B cell (primary cell): ENCODE measurements at regions of chr1 and their contacts with region 1.

Region 1: GRCh38 chr1:18902523-18903290 is at the start of gene ALDH4A1:
- DNase-seq: peak; percentile 96
- ATAC-seq: peak; percentile 96
- H3K4me3 ChIP-seq: peak within 1 kb of the TSS; percentile 60 to 85 (median 80)
- H3K4me3 Mint-ChIP-seq: peak within 1 kb of the TSS; percentile 88
- H3K27ac ChIP-seq: peak within 1 kb of the TSS; percentile 85 to 89
- H3K27ac Mint-ChIP-seq: peak within 1 kb of the TSS; percentile 98
- H3K4me1 ChIP-seq: peaks cover 18 to 30% of the 10 kb centered on the region in 2 donors
- H3K4me1 Mint-ChIP-seq: peaks cover 24% of the 10 kb centered on the region
- H3K27me3 ChIP-seq: no peaks in the 10 kb centered on the region
- H3K27me3 Mint-ChIP-seq: no peaks in the 10 kb centered on the region
- CTCF ChIP-seq: no peak
- total RNA-seq, gene ALDH4A1: 3.4 and 3.9 TPM in 2 replicates

Region 2: DNA sequence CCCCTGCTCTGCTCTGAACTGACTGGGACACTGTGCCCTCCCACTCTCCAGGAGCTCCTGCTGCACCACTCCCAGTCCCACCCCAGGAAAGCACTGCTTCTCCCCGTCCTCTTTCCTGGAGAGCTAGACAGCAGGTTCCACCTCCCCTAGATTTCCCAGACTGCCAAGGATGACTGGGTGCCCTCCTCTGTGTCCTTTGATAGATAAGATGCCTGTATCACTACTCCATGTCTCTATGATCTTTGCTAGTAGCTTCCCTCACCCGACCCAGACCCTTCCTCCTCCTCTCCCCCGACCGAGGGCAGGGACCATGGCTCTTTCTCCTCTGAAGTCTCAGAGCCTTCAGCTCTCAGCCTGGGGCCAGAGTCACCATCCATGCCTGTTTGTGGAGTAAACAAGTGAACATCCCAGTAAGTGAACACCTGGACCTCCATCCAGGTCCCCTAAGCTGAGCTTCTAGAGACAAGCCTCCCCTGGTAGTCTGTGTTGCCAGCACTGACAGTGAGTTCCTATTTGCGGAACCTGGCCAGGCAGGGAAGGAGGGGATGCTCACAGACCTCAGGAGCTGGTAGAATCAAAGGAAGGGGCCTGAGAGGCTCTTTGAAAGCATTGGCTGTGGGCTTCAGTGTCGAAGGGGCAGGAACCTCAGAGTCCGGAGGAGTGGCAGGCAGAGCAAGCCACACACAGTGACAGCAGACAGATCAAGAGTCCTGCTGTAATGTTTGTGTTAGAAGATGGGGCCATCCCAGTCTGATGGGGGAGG is 168.1 kb before region 1 on chr1:
- CTCF ChIA-PET with region 1: no interaction called
- POLR2A ChIA-PET with region 1: no interaction called
- intact Hi-C with region 1: no loop called
- DNase-seq: no peak
- ATAC-seq: no peak
- H3K4me3 ChIP-seq: no peak overlapping the region
- H3K4me3 Mint-ChIP-seq: no peak overlapping the region
- H3K27ac ChIP-seq: no peak overlapping the region
- H3K27ac Mint-ChIP-seq: no peak overlapping the region
- H3K4me1 ChIP-seq: no peaks in the 10 kb centered on the region
- H3K4me1 Mint-ChIP-seq: no peaks in the 10 kb centered on the region
- H3K27me3 ChIP-seq: peaks cover 0 to 7% (median 1%) of the 10 kb centered on the region in 4 experiments
- H3K27me3 Mint-ChIP-seq: peaks cover 23% of the 10 kb centered on the region
- CTCF ChIP-seq: no peak

Region 3: GRCh38 chr1:18805925-18806849 is 96.5 kb before region 1 on chr1:
- CTCF ChIA-PET with region 1: no interaction called
- POLR2A ChIA-PET with region 1: no interaction called
- intact Hi-C with region 1: no loop called
- DNase-seq: no peak
- ATAC-seq: no peak
- H3K4me3 ChIP-seq: no peak overlapping the region
- H3K4me3 Mint-ChIP-seq: no peak overlapping the region
- H3K27ac ChIP-seq: no peak overlapping the region
- H3K27ac Mint-ChIP-seq: no peak overlapping the region
- H3K4me1 ChIP-seq: no peaks in the 10 kb centered on the region
- H3K4me1 Mint-ChIP-seq: no peaks in the 10 kb centered on the region
- H3K27me3 ChIP-seq: peaks cover 0 to 5% (median 0%) of the 10 kb centered on the region in 4 experiments
- H3K27me3 Mint-ChIP-seq: peaks cover 23% of the 10 kb centered on the region
- CTCF ChIP-seq: no peak

Region 4: DNA sequence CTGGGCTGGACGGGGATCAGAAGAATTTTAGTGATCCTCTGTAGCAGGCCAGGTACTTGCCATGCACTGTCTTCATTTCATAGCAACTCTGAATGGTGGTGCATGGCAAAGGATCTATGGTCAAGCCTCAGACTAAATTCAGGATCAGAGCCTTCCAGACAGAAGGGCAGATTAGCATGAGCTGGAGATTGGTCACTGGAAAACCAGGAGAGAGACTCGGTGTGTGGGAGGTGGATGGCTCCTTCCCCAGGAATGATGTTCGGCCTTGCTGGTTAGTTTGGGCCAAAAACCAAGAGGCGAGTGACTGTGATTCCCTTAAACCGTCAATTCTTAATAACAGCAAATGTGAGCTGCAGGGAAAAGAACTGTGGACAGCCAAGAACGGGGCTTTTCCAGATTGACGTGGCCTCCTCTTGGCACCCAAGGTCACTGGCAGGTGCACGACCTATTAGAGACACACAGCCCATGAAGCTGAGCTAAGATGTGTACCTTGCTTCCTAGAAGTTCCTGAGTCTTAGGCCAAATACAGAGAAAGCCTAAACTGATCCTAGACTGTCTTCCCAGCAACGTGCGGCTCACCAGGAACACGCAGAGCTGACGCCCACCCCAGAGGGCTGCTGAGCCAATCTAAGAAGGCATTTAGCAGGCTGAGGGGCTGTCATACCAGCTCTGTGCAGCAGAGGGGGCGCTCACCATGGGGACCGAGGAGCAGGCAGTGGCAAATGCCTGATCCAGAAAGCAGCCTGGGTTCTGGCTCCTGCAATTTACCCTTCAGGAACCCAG is 18.9 kb before region 1 on chr1:
- CTCF ChIA-PET with region 1: interaction called, 44 read pairs
- POLR2A ChIA-PET with region 1: no interaction called
- intact Hi-C with region 1: loop called (anchors 1 kb)
- DNase-seq: peak; percentile 76
- ATAC-seq: peak; percentile 79
- H3K4me3 ChIP-seq: no peak overlapping the region
- H3K4me3 Mint-ChIP-seq: no peak overlapping the region
- H3K27ac ChIP-seq: no peak overlapping the region
- H3K27ac Mint-ChIP-seq: no peak overlapping the region
- H3K4me1 ChIP-seq: no peaks in the 10 kb centered on the region
- H3K4me1 Mint-ChIP-seq: no peaks in the 10 kb centered on the region
- H3K27me3 ChIP-seq: no peaks in the 10 kb centered on the region
- H3K27me3 Mint-ChIP-seq: no peaks in the 10 kb centered on the region
- CTCF ChIP-seq: peak; percentile 96

Region 5: GRCh38 chr1:18926315-18927081 is 23.8 kb after region 1 on chr1:
- CTCF ChIA-PET with region 1: interaction called, 57 read pairs
- POLR2A ChIA-PET with region 1: interaction called, 10 read pairs
- intact Hi-C with region 1: loop called (anchors 1 kb)
- DNase-seq: peak; percentile 72
- ATAC-seq: peak; percentile 84
- H3K4me3 ChIP-seq: peak overlapping the region; percentile 11 to 51 (median 38)
- H3K4me3 Mint-ChIP-seq: peak overlapping the region; percentile 68
- H3K27ac ChIP-seq: peak overlapping the region; percentile 73 to 85
- H3K27ac Mint-ChIP-seq: peak overlapping the region; percentile 97
- H3K4me1 ChIP-seq: peaks cover 53 to 54% of the 10 kb centered on the region in 2 donors
- H3K4me1 Mint-ChIP-seq: peaks cover 71% of the 10 kb centered on the region
- H3K27me3 ChIP-seq: no peaks in the 10 kb centered on the region
- H3K27me3 Mint-ChIP-seq: no peaks in the 10 kb centered on the region
- CTCF ChIP-seq: peak; percentile 19

Region 6: DNA sequence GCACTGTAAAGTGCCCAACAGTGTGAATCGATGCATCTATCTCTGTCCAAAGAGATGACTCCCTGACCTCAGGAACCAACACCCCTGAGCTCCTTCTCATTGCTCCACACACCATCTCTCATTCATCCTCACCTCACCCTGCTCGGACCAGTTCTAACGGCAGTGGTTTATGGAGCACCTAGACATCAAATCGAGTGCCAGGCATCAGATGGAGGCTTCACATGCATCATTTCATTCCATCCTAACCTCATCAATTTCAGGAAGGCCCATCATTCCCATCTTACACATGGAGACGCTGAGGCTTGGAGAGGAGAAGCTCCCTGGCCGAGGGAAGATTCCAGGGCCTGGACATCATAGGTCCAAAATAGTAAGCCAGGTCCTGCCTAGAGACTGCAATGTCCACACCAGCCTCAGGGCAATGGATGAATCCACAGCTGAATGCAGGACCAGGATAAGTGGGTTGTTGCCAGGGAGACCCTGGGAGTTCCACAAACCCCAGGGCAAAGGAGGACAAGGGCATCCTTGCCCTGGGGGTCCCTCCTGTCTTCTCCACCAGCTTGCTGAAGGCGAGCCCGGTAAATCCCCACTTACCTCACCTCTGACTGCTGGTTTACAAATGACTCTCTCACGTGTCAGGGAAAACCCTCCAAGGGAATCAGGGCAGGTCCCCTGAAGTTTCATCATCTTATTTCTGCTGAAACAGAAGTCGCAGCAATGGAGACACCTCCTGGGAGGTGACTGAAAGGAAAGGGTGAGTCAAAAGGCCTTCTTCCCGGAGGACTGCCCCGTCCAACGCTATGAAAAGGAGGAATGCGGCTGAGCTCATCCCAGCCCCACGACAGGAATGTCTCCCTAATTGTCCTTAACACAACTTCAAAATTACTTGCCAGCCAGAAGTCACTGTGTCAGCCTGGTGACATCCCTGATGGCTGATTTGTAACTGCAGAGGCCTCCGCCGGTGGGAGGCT is 62.8 kb after region 1 on chr1:
- CTCF ChIA-PET with region 1: interaction called, 81 read pairs
- POLR2A ChIA-PET with region 1: no interaction called
- intact Hi-C with region 1: no loop called
- DNase-seq: no peak
- ATAC-seq: no peak
- H3K4me3 ChIP-seq: no peak overlapping the region
- H3K4me3 Mint-ChIP-seq: no peak overlapping the region
- H3K27ac ChIP-seq: no peak overlapping the region
- H3K27ac Mint-ChIP-seq: no peak overlapping the region
- H3K4me1 ChIP-seq: no peaks in the 10 kb centered on the region
- H3K4me1 Mint-ChIP-seq: no peaks in the 10 kb centered on the region
- H3K27me3 ChIP-seq: peaks cover 0 to 4% (median 2%) of the 10 kb centered on the region in 4 experiments
- H3K27me3 Mint-ChIP-seq: peaks cover 29% of the 10 kb centered on the region
- CTCF ChIP-seq: no peak

Region 7: GRCh38 chr1:19087737-19088594 is 185.3 kb after region 1 on chr1:
- CTCF ChIA-PET with region 1: interaction called, 13 read pairs
- POLR2A ChIA-PET with region 1: no interaction called
- intact Hi-C with region 1: no loop called
- DNase-seq: peak; percentile 20
- ATAC-seq: no peak
- H3K4me3 ChIP-seq: no peak overlapping the region
- H3K4me3 Mint-ChIP-seq: no peak overlapping the region
- H3K27ac ChIP-seq: no peak overlapping the region
- H3K27ac Mint-ChIP-seq: peak overlapping the region; percentile 65
- H3K4me1 ChIP-seq: no peaks in the 10 kb centered on the region
- H3K4me1 Mint-ChIP-seq: peaks cover 3% of the 10 kb centered on the region
- H3K27me3 ChIP-seq: no peaks in the 10 kb centered on the region
- H3K27me3 Mint-ChIP-seq: no peaks in the 10 kb centered on the region
- CTCF ChIP-seq: no peak

Region 8: GRCh38 chr1:19113697-19114092 is 211.0 kb after region 1 on chr1:
- CTCF ChIA-PET with region 1: interaction called, 25 read pairs
- POLR2A ChIA-PET with region 1: no interaction called
- intact Hi-C with region 1: loop called (anchors 1 kb)
- DNase-seq: peak; percentile 33
- ATAC-seq: no peak
- H3K4me3 ChIP-seq: no peak overlapping the region
- H3K4me3 Mint-ChIP-seq: no peak overlapping the region
- H3K27ac ChIP-seq: no peak overlapping the region
- H3K27ac Mint-ChIP-seq: no peak overlapping the region
- H3K4me1 ChIP-seq: no peaks in the 10 kb centered on the region
- H3K4me1 Mint-ChIP-seq: no peaks in the 10 kb centered on the region
- H3K27me3 ChIP-seq: no peaks in the 10 kb centered on the region
- H3K27me3 Mint-ChIP-seq: no peaks in the 10 kb centered on the region
- CTCF ChIP-seq: peak; percentile 39